Endothelial cell of umbilical vein (primary cell): ENCODE measurements at regions of chr12 and their contacts with region 1.

Region 1: DNA sequence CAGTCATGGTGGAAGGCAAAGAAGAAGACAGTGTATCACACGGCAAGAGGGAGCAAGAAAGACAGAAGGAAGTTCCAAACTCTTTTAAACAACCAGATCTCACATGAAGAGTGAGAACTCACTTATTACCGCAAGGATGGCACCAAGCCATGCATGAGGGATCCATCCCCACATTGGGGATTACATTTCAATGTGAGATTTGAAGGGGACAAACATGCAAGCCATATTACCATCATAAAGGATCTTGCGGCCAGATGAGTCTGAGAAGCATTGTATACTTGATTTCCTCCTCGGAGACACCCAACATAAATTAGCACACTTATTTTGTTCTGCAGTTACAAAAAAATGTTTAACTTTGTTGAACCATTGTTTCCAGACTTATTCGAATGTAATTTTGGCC is 66.5 kb downstream of the TBK1 start:
- DNase-seq: no peak
- H3K4me3 ChIP-seq: no peak overlapping the region
- H3K27ac ChIP-seq: no peak overlapping the region
- H3K4me1 ChIP-seq: no peaks in the 10 kb centered on the region
- H3K27me3 ChIP-seq: peaks cover 5 to 8% of the 10 kb centered on the region in 2 experiments
- CTCF ChIP-seq: no peak
- POLR2A ChIP-seq: no peak

Region 2: GRCh38 chr12:65182012-65182739 is 663.8 kb after region 1 on chr12:
- CTCF ChIA-PET with region 1: no interaction called
- POLR2A ChIA-PET with region 1: no interaction called
- dilution Hi-C with region 1: no loop called
- intact Hi-C with region 1: loop called (anchors 5 kb)
- DNase-seq: no peak
- H3K4me3 ChIP-seq: no peak overlapping the region
- H3K27ac ChIP-seq: no peak overlapping the region
- H3K4me1 ChIP-seq: no peaks in the 10 kb centered on the region
- H3K27me3 ChIP-seq: no peaks in the 10 kb centered on the region
- CTCF ChIP-seq: no peak
- POLR2A ChIP-seq: no peak